ENCODE measurements at regions of chr5 and their contacts with region 1.

Region 1: DNA sequence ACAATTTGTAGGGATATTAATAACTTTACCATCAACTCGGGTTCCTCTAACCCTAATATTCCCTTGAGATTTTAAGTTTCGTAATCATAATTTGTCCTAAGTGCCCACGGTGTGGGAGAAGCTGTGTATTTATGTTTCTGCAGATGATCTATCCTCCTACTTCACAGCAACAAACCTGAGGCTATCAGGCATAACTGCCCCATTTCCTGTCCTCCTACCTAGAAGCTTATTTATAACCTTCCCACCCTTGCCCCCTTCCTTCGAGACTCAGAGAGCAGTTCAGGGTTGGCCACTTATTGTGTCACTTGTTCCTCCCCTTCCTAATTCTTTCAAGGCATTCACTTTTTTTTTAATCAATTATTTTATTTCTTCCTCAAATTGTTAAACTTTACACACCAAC is 29.6 kb upstream of the LCP2 start:
- DNase-seq: no peak
- ATAC-seq: peak; percentile 50
- H3K4me3 ChIP-seq: peak overlapping the region; percentile 33; the same call in 1 of the 2 replicates
- H3K27ac ChIP-seq: peak overlapping the region; percentile 1; the same call in 1 of the 2 replicates
- H3K4me1 ChIP-seq: peaks cover 36% of the 10 kb centered on the region
- H3K27me3 ChIP-seq: no peaks in the 10 kb centered on the region
- CTCF ChIP-seq: no peak
- EP300 ChIP-seq: no peak
- POLR2A ChIP-seq: no peak
- RAD21 ChIP-seq: no peak

Region 2: GRCh38 chr5:170302653-170303501 is 24.3 kb before region 1 on chr5:
- CTCF ChIA-PET with region 1: interaction called, 134 read pairs
- POLR2A ChIA-PET with region 1: interaction called, 169 read pairs
- RAD21 ChIA-PET with region 1: interaction called, 274 read pairs
- SMC1A ChIA-PET with region 1: interaction called, 274 read pairs
- in situ Hi-C with region 1: no loop called
- intact Hi-C with region 1: no loop called
- DNase-seq: peak; percentile 68
- ATAC-seq: peak; percentile 89
- H3K4me3 ChIP-seq: no peak overlapping the region
- H3K27ac ChIP-seq: peak overlapping the region; percentile 24; the same call in 1 of the 2 replicates
- H3K4me1 ChIP-seq: peaks cover 34% of the 10 kb centered on the region
- H3K27me3 ChIP-seq: no peaks in the 10 kb centered on the region
- CTCF ChIP-seq: no peak
- EP300 ChIP-seq: no peak
- POLR2A ChIP-seq: no peak
- RAD21 ChIP-seq: no peak

Region 3: GRCh38 chr5:170312666-170313065 is 14.5 kb before region 1 on chr5:
- CTCF ChIA-PET with region 1: interaction called, 21 read pairs
- POLR2A ChIA-PET with region 1: interaction called, 8 read pairs
- RAD21 ChIA-PET with region 1: interaction called, 18 read pairs
- SMC1A ChIA-PET with region 1: interaction called, 52 read pairs
- in situ Hi-C with region 1: no loop called
- intact Hi-C with region 1: no loop called
- DNase-seq: no peak
- ATAC-seq: peak; percentile 75
- H3K4me3 ChIP-seq: no peak overlapping the region
- H3K27ac ChIP-seq: no peak overlapping the region
- H3K4me1 ChIP-seq: peaks cover 11% of the 10 kb centered on the region
- H3K27me3 ChIP-seq: no peaks in the 10 kb centered on the region
- CTCF ChIP-seq: no peak
- EP300 ChIP-seq: no peak
- POLR2A ChIP-seq: no peak
- RAD21 ChIP-seq: no peak

Region 4: DNA sequence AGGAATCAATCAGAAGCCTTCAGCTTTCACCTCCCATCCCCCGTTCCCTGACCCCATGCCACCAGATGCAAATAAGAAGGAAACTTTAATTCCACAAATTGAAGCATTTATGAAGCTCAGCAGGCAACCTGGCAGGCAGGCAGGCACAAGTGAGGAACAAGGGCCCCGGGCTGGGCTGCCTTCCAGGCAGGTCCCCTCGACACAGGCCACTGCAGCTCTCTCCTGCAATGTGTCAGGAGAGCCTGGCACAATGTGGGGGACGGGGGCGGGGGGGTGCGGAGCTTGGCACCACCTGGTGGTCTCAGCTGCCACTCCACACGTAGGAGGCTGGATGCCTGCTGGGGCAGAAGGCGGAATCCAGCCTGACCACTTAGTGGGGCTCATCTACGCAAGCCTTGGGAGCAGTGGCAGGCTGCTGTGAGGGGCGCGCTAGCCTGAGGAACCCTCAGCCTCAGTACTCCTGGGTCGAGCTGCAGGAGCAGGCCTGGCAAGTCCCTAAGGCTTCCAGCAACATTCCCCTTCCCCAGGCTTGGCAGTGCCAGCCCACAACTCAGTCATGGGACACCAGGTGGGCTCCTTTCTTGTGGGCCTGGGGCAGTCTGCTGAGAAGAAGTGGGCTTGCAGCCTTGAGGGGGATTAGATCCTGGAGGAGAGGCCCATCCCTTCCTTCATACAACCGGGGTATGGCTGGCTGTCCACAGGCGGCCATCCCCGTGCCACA is 112.2 kb after region 1 on chr5:
- CTCF ChIA-PET with region 1: no interaction called
- POLR2A ChIA-PET with region 1: no interaction called
- RAD21 ChIA-PET with region 1: no interaction called
- SMC1A ChIA-PET with region 1: no interaction called
- in situ Hi-C with region 1: no loop called
- intact Hi-C with region 1: no loop called
- DNase-seq: no peak
- ATAC-seq: no peak
- H3K4me3 ChIP-seq: no peak overlapping the region
- H3K27ac ChIP-seq: no peak overlapping the region
- H3K4me1 ChIP-seq: no peaks in the 10 kb centered on the region
- H3K27me3 ChIP-seq: no peaks in the 10 kb centered on the region; a peak in 2 of 4 replicates
- CTCF ChIP-seq: no peak
- EP300 ChIP-seq: no peak
- POLR2A ChIP-seq: no peak
- RAD21 ChIP-seq: no peak

Measured in GM12878 (cell line).